ENCODE measurements at regions of chr3 and their contacts with region 1.

Region 1: GRCh38 chr3:169662132-169662842 is 1.2 kb downstream of the MECOM start:
- DNase-seq: peak; percentile 76
- H3K4me3 Mint-ChIP-seq: peak overlapping the region; percentile 85
- H3K27ac Mint-ChIP-seq: no peak overlapping the region
- H3K4me1 Mint-ChIP-seq: peaks cover 38% of the 10 kb centered on the region
- H3K27me3 Mint-ChIP-seq: peaks cover 86% of the 10 kb centered on the region

Region 2: DNA sequence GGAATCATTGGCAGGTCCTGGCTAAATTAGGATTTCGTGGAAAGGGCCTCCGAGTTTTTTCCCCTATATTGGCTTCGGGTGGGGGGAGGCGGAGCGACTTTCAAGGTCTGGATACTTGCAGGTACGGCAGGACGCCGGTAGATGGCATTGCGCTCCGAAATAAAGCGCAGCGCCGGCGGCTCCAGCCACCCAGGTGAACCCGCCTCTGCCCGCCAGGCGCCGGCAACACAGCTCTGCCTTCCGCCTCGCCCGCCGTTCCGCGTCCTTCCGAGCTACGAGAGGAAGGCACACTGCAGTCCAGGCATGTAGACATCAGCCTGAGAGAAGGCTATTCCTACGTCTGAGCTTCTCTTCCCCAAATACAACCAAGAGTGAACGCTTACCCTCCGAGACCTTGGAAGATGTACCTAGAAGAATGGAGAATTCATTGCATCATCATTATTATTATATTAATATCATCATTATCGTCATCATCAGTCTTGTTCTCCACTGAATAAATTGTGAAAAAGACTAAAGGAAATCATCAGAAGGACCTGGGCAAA is 512.9 kb before region 1 on chr3:
- intact Hi-C with region 1: loop called (anchors 1 kb)
- DNase-seq: peak; percentile 92
- H3K4me3 Mint-ChIP-seq: peak overlapping the region; percentile 67
- H3K27ac Mint-ChIP-seq: no peak overlapping the region
- H3K4me1 Mint-ChIP-seq: peaks cover 18% of the 10 kb centered on the region
- H3K27me3 Mint-ChIP-seq: peaks cover 68% of the 10 kb centered on the region

Region 3: GRCh38 chr3:169836078-169836941 is 174.0 kb after region 1 on chr3:
- intact Hi-C with region 1: no loop called
- DNase-seq: no peak
- H3K4me3 Mint-ChIP-seq: no peak overlapping the region
- H3K27ac Mint-ChIP-seq: no peak overlapping the region
- H3K4me1 Mint-ChIP-seq: no peaks in the 10 kb centered on the region
- H3K27me3 Mint-ChIP-seq: peaks cover 18% of the 10 kb centered on the region

Measured in activated CD4-positive, alpha-beta T cell treated with anti-CD3 and anti-CD28 coated beads, Interleukin-2, amount 10 ng/mL, durations not matched to agents 24 days and 14 days (primary cell).